ENCODE measurements at regions of chr2 and their contacts with region 1.

Region 1: DNA sequence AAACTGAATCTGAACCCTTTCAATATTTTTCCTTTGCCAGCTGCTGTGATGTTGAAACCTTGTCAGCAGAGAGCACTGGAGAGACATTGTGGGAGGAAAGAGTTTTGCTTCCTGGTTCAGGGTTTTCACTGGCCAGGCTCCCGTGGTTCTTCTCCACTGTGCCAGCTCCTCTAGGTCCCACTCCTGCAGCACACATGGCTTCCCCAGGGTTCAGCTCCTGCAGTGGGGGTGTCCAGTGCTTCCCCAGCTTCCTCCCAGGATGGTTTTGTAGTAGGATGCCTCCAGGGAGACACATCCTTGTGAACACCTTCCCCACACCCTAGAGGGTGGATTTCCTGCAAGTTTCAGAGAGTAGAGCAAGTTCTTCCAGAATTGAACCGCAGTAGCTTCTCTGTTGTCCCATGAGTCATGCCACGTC is 24.0 kb upstream of the SULT1C3 start:
- DNase-seq: peak; percentile 55
- ATAC-seq: peak; percentile 98
- H3K4me3 ChIP-seq: peak overlapping the region; percentile 19 to 55 (median 19); a peak in 3 of 6 replicates
- H3K27ac ChIP-seq: no peak overlapping the region
- H3K4me1 ChIP-seq: peaks cover 22% of the 10 kb centered on the region
- H3K27me3 ChIP-seq: no peaks in the 10 kb centered on the region
- CTCF ChIP-seq: peak; percentile 84
- EP300 ChIP-seq: no peak
- POLR2A ChIP-seq: no peak
- RAD21 ChIP-seq: peak; percentile 67

Region 2: DNA sequence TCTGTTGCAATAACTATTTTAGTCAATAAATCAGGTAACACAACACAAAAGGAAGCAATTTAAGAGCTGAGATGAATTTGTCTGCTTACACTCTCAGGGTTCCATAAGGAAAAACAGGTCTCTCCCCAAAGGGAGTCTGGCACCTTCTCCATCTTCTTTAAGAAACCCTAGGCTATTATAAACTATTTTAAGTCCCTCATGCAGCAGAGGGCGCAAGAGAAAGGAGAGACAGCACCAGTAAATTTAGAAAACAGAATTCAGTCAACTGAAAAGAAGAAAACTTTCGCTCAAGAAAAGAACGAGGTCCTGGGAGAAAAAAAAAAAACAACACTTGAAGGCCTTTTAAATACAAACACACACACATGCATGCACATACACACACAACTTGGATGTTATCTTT is 181.0 kb after region 1 on chr2:
- CTCF ChIA-PET with region 1: no interaction called
- POLR2A ChIA-PET with region 1: no interaction called
- in situ Hi-C with region 1: no loop called
- intact Hi-C with region 1: loop called (anchors 10 kb)
- DNase-seq: peak; percentile 57
- ATAC-seq: peak; percentile 59; the same call in 2 of the 3 replicates
- H3K4me3 ChIP-seq: no peak overlapping the region
- H3K27ac ChIP-seq: no peak overlapping the region
- H3K4me1 ChIP-seq: peaks cover 3% of the 10 kb centered on the region
- H3K27me3 ChIP-seq: 0 out of 5 replicates have a peak, but pooled peaks cover 0 to 5% of the 10 kb centered on the region in 2 experiments
- CTCF ChIP-seq: peak; percentile 63
- EP300 ChIP-seq: no peak
- POLR2A ChIP-seq: no peak
- RAD21 ChIP-seq: no peak

Measured in HepG2 (cell line).